ENCODE measurements at regions of chr20 and their contacts with region 1.

Region 1: GRCh38 chr20:23257848-23258746 is 92.5 kb upstream of the NXT1 start:
- DNase-seq: peak; percentile 88
- H3K4me3 Mint-ChIP-seq: no peak overlapping the region
- H3K27ac Mint-ChIP-seq: peak overlapping the region; percentile 57
- H3K4me1 Mint-ChIP-seq: peaks cover 26% of the 10 kb centered on the region
- H3K27me3 Mint-ChIP-seq: no peaks in the 10 kb centered on the region
- CTCF ChIP-seq: no peak

Region 2: DNA sequence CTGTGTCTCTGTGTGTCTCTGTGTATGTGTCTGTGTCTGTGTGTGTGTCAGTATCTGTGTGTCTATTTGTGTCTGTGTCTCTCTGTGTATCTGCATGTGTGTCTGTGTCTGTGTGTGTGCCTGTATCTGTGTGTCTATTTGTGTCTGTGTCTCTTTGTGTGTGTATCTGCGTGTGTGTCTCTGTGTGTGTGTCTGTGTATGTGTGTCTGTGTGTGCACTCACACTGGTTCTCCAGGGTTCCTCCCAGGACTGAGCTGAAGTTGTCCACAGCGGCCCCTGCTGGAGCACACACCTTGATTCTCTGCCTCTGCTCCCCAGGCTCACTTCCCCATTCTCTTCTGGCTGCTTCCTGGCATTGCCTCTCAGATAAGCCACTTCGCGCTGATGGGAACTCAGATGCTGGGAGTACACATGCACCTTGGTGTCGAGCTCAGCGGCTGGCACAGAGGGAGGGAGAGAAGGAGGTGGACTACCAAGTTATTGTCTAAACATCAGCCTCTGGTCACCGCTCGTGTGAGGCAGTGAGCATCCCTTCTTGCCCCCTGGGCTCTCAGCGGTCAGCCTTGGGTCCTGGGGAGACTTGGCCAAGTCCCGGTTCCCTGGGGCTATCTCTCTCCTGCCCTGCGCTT is 12.4 kb before region 1 on chr20:
- CTCF ChIA-PET with region 1: interaction called, 10 read pairs
- POLR2A ChIA-PET with region 1: interaction called, 5 read pairs
- intact Hi-C with region 1: no loop called
- DNase-seq: peak; percentile 43
- H3K4me3 Mint-ChIP-seq: no peak overlapping the region
- H3K27ac Mint-ChIP-seq: no peak overlapping the region
- H3K4me1 Mint-ChIP-seq: no peaks in the 10 kb centered on the region
- H3K27me3 Mint-ChIP-seq: no peaks in the 10 kb centered on the region
- CTCF ChIP-seq: peak; percentile 36